ENCODE measurements at regions of chr3 and their contacts with region 1.

Region 1: DNA sequence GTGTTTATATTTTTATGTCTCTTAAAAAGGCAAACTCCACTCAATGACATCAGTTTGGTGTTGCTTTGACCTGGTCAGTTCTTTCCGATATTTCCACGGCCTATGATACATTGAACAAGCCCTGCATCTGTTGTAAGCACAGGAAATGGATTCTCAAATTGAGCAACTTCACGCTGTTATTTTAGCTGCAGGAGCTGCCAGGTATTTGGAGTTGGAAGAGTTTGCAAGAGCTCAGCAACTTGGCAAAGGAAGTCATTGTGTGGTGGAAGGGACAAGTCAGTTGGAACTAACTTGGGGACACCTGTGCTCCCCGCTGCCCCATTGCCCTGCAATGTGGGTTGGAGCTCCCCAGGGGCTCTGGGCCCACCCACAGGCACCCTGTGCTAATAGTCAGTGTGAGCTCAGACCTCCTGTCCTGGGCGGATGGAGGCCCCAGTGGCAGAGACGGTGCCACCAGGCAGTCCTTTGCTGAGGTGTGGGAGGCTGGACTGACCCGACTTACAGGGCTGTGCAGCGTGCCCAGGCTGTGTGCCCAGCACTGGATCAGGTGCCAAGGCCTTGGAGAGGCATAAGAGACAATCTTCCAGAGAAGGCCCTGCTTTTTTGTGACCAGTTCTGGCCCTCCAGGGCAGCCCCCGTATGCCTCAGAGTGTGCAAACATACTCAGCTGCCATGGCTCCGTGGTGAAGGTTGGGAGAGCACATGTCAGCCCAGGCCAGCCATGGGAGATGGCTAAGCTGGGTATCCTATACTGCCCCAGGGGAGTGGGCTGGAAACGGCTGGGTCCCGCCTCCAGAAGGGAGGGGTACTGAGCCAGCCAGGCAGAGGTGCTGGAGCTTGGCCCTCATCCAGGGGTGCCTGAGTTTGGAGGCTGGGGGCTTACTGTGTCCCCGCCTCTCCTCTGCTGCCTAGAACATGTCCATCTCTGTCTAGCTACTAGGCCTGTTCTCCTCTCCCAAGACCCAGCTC is 43.5 kb downstream of the KY start:
- DNase-seq: no peak
- H3K4me3 ChIP-seq: no peak overlapping the region
- H3K27ac ChIP-seq: no peak overlapping the region
- H3K4me1 ChIP-seq: peaks cover 0 to 4% (median under 1%) of the 10 kb centered on the region in 4 experiments; a peak in 3 of 7 replicates
- H3K27me3 ChIP-seq: peaks cover 0 to 2% (median 0%) of the 10 kb centered on the region in 4 experiments; a peak in 2 of 7 replicates
- CTCF ChIP-seq: no peak
- EP300 ChIP-seq: no peak
- POLR2A ChIP-seq: no peak
- RAD21 ChIP-seq: no peak

Region 2: DNA sequence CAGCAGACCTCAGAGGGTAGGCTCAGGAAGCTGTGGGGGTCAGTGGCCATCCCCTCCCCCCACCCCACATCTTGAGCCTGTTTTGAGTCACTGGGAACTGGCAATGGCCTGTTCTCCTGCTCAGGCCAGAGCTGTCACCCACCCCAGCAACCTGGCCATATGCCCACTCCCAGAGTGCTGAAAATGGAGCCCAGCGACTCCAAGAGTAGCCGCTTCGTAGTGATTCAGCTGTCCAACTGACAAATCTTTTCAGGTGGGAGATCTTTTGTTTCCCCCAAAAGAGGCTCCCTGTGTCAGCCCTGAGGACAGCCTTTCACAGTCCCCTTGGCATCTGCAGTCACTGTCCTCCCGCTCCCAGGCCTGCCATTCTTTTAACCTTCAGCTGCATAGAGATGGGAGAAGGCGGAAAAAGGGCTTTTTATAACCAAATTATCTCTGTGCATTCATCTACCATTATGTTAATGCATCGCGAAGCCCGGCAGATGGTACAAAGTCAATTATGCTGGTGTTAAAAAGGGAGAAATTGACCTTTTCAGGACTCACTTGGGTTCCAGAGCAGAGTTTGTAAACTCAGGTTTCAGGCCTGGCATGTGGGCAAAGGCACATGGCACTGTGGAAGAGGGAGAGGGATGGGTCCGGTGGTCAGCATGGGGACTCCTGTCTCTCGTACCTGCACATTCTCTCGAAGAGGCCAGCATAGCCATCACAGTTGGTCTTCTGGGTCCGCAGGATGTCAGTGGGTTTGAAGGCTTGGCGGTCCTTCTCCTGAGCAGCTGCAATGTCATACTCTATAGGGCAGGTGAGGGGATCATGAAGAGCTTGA is 11.4 kb after region 1 on chr3:
- CTCF ChIA-PET with region 1: interaction called, 25 read pairs
- POLR2A ChIA-PET with region 1: no interaction called
- DNase-seq: peak in 1 of 2 experiments; percentile 33
- H3K4me3 ChIP-seq: no peak overlapping the region
- H3K27ac ChIP-seq: no peak overlapping the region
- H3K4me1 ChIP-seq: peaks cover 0 to 3% (median 0%) of the 10 kb centered on the region in 4 experiments; a peak in 1 of 7 replicates
- H3K27me3 ChIP-seq: no peaks in the 10 kb centered on the region
- CTCF ChIP-seq: no peak
- EP300 ChIP-seq: no peak
- POLR2A ChIP-seq: no peak
- RAD21 ChIP-seq: no peak

Measured in H1 (cell line).